Cardiac septum (tissue), 1 donor: ENCODE measurements at regions of chr1 and their contacts with region 1.

Region 1: GRCh38 chr1:15603050-15603965 is 13.9 kb upstream of the DDI2 start:
- DNase-seq: peak; percentile 99

Region 2: DNA sequence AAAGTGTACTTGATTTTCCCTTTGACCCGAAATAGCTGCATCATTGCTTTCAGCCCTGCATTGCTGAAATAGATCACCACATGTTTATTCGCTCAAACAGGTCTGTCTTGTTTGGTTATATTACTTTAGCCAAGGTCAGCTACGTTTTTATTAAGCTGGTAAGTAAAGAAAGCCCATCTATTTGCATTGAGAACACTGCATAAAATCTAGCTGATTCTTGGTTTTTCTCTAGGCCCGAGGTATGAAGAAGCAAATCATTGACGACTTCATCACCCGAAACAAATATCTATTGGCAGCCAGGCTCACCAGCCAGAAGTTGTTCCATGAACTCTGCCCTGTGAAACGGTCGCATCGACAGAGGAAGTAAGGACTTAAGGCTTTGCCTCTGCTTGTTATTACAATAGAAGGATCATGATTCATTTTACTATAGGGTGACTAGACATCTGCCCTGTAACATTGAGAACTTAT is 44.0 kb before region 1 on chr1:
- intact Hi-C with region 1: no loop called
- DNase-seq: no peak

Region 3: GRCh38 chr1:15570861-15571260 is 32.4 kb before region 1 on chr1:
- intact Hi-C with region 1: no loop called
- DNase-seq: no peak

Region 4: DNA sequence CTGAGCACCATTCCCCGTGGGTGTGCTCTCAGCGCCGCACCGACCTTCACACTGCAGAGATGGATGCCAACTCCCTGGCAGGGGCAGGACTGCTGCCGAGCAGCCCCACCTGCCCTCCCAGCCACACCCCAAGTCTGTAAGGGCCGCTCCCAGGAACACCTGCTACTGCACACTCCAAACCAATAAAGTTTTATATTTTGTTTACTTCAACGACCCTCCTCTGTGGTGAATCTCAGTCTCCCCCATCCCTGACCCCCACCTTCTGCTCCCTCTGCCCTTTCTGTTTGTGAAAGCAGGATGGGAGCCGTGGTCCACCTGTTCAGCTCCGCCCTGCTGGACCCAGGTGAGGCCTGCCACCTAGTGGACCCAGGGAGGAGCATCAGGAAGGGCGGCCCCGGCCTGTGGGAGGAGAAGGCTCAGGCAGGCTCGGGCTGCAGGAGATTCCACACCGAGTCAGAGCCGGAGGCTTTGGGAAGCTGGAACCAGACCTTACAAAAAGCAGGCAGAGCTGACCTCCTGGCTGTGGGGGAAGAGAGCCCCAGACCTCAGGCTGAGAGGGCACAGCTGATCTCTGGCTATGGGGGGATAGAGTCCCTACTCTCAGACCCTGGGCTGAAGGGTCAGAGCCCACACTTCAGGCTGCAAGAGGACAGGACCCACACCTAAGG is 138.0 kb after region 1 on chr1:
- intact Hi-C with region 1: loop called (anchors 5 kb)
- DNase-seq: peak; percentile 88